B cell (primary cell): ENCODE measurements at regions of chr6 and their contacts with region 1.

Region 1: GRCh38 chr6:144149891-144150709 is at the start of gene STX11:
- DNase-seq: peak; percentile 85
- ATAC-seq: peak; percentile 75
- H3K4me3 ChIP-seq: peak within 1 kb of the TSS; percentile 54 to 96 (median 76)
- H3K4me3 Mint-ChIP-seq: peak within 1 kb of the TSS; percentile 96
- H3K27ac ChIP-seq: peak within 1 kb of the TSS; percentile 61 to 78
- H3K27ac Mint-ChIP-seq: peak within 1 kb of the TSS; percentile 97
- H3K4me1 ChIP-seq: peaks cover 9 to 15% of the 10 kb centered on the region in 2 donors
- H3K4me1 Mint-ChIP-seq: peaks cover 42% of the 10 kb centered on the region
- H3K27me3 ChIP-seq: no peaks in the 10 kb centered on the region
- H3K27me3 Mint-ChIP-seq: no peaks in the 10 kb centered on the region
- CTCF ChIP-seq: no peak
- total RNA-seq, gene STX11: 10.3 and 11.6 TPM in 2 replicates

Region 2: GRCh38 chr6:144063744-144064401 is 86.2 kb before region 1 on chr6:
- CTCF ChIA-PET with region 1: no interaction called
- POLR2A ChIA-PET with region 1: no interaction called
- intact Hi-C with region 1: loop called (anchors 1 kb)
- DNase-seq: peak; percentile 97
- ATAC-seq: peak; percentile 91
- H3K4me3 ChIP-seq: peak overlapping the region; percentile 74 to 86 (median 82)
- H3K4me3 Mint-ChIP-seq: peak overlapping the region; percentile 90
- H3K27ac ChIP-seq: peak overlapping the region; percentile 88 to 96
- H3K27ac Mint-ChIP-seq: peak overlapping the region; percentile 92
- H3K4me1 ChIP-seq: peaks cover 21 to 32% of the 10 kb centered on the region in 2 donors
- H3K4me1 Mint-ChIP-seq: peaks cover 37% of the 10 kb centered on the region
- H3K27me3 ChIP-seq: no peaks in the 10 kb centered on the region
- H3K27me3 Mint-ChIP-seq: no peaks in the 10 kb centered on the region
- CTCF ChIP-seq: peak; percentile 14

Region 3: DNA sequence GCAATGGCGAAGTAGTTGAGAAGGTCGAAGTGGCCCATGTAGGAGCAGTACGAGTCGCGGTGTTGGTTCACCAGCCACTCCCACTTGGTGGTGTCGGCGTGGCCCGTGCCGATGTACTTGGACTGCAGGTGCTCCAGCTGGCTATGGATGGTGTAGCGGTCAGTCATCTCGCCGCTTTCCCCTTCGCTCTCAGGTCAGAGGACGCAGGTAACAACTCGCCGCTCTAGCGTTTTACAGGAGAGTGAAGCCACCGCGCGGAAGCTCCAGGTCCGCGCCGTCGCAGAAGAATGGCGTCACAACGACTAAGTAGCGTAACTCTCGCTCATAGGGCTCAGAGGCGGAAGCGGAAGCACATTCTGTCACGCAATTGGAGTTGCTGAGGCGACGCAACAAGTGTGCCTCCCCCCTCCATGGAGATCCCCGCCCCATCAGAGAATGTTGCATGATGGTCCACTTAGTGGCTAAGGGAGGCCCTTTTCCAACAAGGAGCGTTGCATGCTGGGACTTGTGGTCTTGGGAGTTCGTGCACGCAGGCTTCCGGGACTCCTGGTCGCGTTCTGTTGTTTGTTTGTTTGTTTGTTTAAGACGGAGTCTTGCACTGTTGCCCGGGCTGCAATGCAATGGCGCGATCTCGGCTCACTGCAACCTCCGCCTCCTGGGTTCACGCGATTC is 54.6 kb before region 1 on chr6 and contains the start of gene SF3B5:
- CTCF ChIA-PET with region 1: no interaction called
- POLR2A ChIA-PET with region 1: no interaction called
- intact Hi-C with region 1: loop called (anchors 1 kb)
- DNase-seq: peak; percentile 99
- ATAC-seq: peak; percentile 97
- H3K4me3 ChIP-seq: peak within 1 kb of the TSS; percentile 63 to 98 (median 73)
- H3K4me3 Mint-ChIP-seq: peak within 1 kb of the TSS; percentile 100
- H3K27ac ChIP-seq: peak within 1 kb of the TSS; percentile 77 to 84
- H3K27ac Mint-ChIP-seq: peak within 1 kb of the TSS; percentile 100
- H3K4me1 ChIP-seq: peaks cover 16 to 22% of the 10 kb centered on the region in 2 donors
- H3K4me1 Mint-ChIP-seq: peaks cover 23% of the 10 kb centered on the region
- H3K27me3 ChIP-seq: no peaks in the 10 kb centered on the region
- H3K27me3 Mint-ChIP-seq: no peaks in the 10 kb centered on the region
- CTCF ChIP-seq: no peak
- total RNA-seq, gene SF3B5: 104 and 111 TPM in 2 replicates

Region 4: GRCh38 chr6:144104898-144105487 is 45.1 kb before region 1 on chr6:
- CTCF ChIA-PET with region 1: no interaction called
- POLR2A ChIA-PET with region 1: no interaction called
- intact Hi-C with region 1: loop called (anchors 2 kb)
- DNase-seq: peak; percentile 81
- ATAC-seq: peak; percentile 80
- H3K4me3 ChIP-seq: no peak overlapping the region
- H3K4me3 Mint-ChIP-seq: no peak overlapping the region
- H3K27ac ChIP-seq: no peak overlapping the region
- H3K27ac Mint-ChIP-seq: no peak overlapping the region
- H3K4me1 ChIP-seq: no peaks in the 10 kb centered on the region
- H3K4me1 Mint-ChIP-seq: no peaks in the 10 kb centered on the region
- H3K27me3 ChIP-seq: no peaks in the 10 kb centered on the region
- H3K27me3 Mint-ChIP-seq: no peaks in the 10 kb centered on the region
- CTCF ChIP-seq: peak; percentile 84

Region 5: DNA sequence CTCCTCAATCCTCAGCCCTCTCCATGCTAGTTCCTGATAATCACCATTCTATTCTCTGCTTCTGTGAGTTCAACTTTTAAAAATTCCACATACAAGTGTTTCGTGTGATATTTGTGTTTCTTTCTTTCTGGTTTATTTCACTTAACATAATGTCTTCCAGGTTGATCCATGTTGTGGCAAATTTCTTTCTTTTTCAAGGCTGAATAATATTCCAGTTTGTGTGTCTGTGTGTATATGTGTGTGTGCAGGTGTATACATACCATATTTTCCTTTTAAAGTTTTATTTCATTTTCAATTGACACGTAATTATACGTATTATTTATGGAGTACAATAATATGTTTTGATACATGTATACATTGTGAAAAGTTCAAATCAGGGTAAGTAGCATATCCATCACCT is 34.9 kb before region 1 on chr6:
- CTCF ChIA-PET with region 1: no interaction called
- POLR2A ChIA-PET with region 1: no interaction called
- intact Hi-C with region 1: no loop called
- DNase-seq: no peak
- ATAC-seq: no peak
- H3K4me3 ChIP-seq: no peak overlapping the region
- H3K4me3 Mint-ChIP-seq: no peak overlapping the region
- H3K27ac ChIP-seq: no peak overlapping the region
- H3K27ac Mint-ChIP-seq: no peak overlapping the region
- H3K4me1 ChIP-seq: no peaks in the 10 kb centered on the region
- H3K4me1 Mint-ChIP-seq: no peaks in the 10 kb centered on the region
- H3K27me3 ChIP-seq: no peaks in the 10 kb centered on the region
- H3K27me3 Mint-ChIP-seq: no peaks in the 10 kb centered on the region
- CTCF ChIP-seq: no peak

Region 6: DNA sequence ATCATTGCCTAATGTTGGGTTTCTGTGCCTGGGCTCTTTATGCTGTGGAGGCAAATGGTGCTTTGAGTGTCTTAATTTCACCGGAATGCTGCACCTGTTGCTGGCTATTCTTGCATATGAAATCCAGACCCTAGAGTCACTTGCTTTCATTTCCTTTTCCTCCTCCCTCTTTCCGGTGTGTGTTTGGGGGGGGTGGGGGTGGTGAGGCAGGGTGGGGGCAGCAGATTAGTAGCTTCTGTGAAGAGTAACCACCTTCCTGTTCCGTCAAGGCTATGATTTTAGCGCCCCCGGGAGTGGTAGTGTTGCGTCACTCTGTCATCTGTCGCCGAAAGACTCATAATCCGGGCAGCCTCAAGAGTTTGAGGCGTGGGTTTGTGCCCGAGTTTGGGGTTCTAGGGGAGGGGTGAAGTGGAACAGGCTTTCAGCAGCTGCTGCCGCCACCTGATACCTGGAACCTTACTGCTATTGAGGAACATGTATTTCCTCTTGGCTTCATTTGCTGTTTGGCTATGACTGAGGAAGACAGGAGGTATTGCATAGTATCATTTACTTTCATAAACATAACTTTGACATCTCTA is 184.1 kb after region 1 on chr6:
- CTCF ChIA-PET with region 1: no interaction called
- POLR2A ChIA-PET with region 1: no interaction called
- intact Hi-C with region 1: loop called (anchors 2 kb)
- DNase-seq: peak; percentile 92
- ATAC-seq: peak; percentile 76
- H3K4me3 ChIP-seq: peak overlapping the region in 4 of 5 experiments; percentile 34 to 53 (median 36)
- H3K4me3 Mint-ChIP-seq: peak overlapping the region; percentile 82
- H3K27ac ChIP-seq: peak overlapping the region; percentile 82 to 94
- H3K27ac Mint-ChIP-seq: peak overlapping the region; percentile 94
- H3K4me1 ChIP-seq: peaks cover 56 to 61% of the 10 kb centered on the region in 2 donors
- H3K4me1 Mint-ChIP-seq: peaks cover 73% of the 10 kb centered on the region
- H3K27me3 ChIP-seq: no peaks in the 10 kb centered on the region
- H3K27me3 Mint-ChIP-seq: no peaks in the 10 kb centered on the region
- CTCF ChIP-seq: no peak

Region 7: DNA sequence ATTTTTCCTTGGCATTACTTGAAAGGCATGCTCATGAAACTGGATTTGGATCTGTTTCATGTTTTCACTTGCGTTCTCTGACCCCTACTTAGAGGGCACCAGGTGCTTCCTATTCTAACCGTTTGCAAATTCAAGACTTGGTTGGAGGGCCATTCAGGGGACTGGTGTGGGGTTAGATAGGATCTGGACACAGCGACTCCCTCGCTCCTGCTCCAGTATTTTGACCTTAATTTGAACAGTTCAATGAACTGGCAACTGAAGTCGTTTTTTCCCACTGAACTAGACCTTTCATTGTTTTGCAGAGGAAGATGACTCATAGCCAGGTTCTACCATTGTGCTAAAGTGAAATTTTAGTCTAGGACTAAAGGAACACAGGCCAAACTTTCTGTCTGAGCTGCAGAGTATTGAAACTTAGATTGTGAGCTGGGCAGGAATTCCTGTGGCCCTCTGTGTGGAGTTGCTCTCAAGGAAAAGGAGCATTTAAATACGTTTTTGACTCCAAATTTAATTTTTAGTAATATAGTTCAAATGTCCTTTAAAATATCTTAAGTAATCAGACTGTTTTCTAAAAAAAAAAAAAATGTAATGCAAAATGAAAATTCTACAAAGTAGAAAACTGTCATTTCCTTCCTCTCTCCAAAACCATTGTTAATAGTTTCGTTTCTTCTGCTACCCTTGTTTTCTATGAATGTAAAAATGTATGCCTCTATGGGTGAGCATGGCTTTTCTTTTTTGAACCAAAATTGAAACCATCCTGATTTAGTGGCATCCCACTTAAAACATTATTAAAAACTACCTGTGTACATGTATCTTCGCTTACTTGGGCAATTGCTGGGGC is 199.8 kb after region 1 on chr6:
- CTCF ChIA-PET with region 1: no interaction called
- POLR2A ChIA-PET with region 1: no interaction called
- intact Hi-C with region 1: loop called (anchors 5 kb)
- DNase-seq: peak; percentile 56
- ATAC-seq: peak; percentile 56
- H3K4me3 ChIP-seq: peak overlapping the region in 4 of 5 experiments; percentile 9 to 55 (median 46)
- H3K4me3 Mint-ChIP-seq: peak overlapping the region; percentile 83
- H3K27ac ChIP-seq: peak overlapping the region; percentile 79 to 80
- H3K27ac Mint-ChIP-seq: peak overlapping the region; percentile 96
- H3K4me1 ChIP-seq: peaks cover 85 to 95% of the 10 kb centered on the region in 2 donors
- H3K4me1 Mint-ChIP-seq: peaks cover 85% of the 10 kb centered on the region
- H3K27me3 ChIP-seq: no peaks in the 10 kb centered on the region
- H3K27me3 Mint-ChIP-seq: no peaks in the 10 kb centered on the region
- CTCF ChIP-seq: no peak